ENCODE measurements at regions of chr5 and their contacts with region 1.

Region 1: GRCh38 chr5:170225326-170226128 is 7.3 kb upstream of the C5orf58 start:
- DNase-seq: peak; percentile 86
- ATAC-seq: peak; percentile 68
- H3K4me3 Mint-ChIP-seq: no peak overlapping the region
- H3K27ac Mint-ChIP-seq: no peak overlapping the region
- H3K4me1 Mint-ChIP-seq: peaks cover 4% of the 10 kb centered on the region
- H3K27me3 Mint-ChIP-seq: no peaks in the 10 kb centered on the region

Region 2: DNA sequence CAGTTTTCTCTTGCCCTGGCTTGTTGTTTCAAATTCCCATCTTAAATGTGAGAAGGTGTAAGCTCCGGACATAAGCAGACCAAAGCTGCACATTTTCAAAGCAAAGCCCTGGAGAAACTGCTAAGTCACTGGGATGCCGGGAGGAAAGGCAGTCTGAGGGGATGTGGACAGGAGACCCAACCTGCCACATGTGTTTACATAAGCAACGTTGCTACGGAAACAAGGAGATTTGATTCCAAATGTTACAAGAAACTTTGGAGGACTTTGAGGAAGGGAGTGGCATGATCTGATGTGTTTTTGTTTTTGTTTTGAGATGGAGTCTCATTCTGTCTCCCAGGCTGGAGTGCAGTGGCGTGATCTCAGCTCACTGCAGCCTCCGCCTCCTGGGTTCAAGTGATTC is 219.5 kb before region 1 on chr5:
- CTCF ChIA-PET with region 1: no interaction called
- POLR2A ChIA-PET with region 1: no interaction called
- DNase-seq: no peak
- ATAC-seq: no peak
- H3K4me3 Mint-ChIP-seq: no peak overlapping the region
- H3K27ac Mint-ChIP-seq: no peak overlapping the region
- H3K4me1 Mint-ChIP-seq: no peaks in the 10 kb centered on the region
- H3K27me3 Mint-ChIP-seq: no peaks in the 10 kb centered on the region

Region 3: DNA sequence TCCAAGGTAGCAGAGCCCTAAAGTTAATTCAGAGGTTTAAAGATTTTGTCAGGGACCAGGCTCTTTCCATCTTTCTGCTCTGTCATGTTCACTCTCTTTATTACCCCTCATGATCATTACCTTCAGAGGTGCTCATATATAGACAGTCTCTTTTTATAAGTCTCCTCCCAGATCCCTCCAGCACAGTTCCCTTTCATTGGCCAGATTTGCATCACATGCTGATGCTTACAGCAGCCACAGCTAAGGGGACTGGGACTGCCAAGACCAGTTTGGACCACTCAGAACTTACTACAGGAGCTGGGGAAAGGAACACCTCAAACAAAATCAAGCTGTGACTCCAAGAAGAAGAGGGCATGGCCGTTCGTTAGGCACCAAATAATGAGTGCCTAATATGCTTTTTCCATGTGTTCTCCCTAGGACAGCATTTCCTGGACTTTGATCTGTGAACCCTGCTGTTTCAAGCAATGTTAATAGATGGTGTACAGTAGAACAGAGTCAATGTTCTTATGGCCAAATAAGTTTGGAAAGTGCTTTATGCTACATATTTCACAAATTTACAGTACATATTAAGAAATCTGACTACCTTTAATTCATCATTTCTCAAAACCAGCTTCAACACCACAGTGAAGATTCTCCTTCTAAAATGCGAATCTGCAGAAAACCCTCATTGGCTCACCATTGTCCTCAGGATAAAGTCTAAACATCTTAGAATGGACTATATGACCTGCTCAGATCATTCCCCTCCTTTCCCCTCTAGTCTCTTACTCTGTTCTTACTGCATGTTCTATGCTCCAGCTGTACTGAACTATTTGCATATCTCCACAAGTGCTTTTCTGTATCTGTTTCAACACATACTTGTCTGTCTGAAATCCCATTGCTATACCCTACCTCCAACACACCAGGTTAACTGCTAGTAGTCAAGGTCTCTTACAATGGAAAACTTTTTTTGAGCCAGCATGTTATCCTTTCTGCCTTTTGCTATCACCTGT is 10.6 kb after region 1 on chr5:
- CTCF ChIA-PET with region 1: interaction called, 29 read pairs
- POLR2A ChIA-PET with region 1: no interaction called
- DNase-seq: no peak
- ATAC-seq: no peak
- H3K4me3 Mint-ChIP-seq: no peak overlapping the region
- H3K27ac Mint-ChIP-seq: no peak overlapping the region
- H3K4me1 Mint-ChIP-seq: peaks cover 3% of the 10 kb centered on the region
- H3K27me3 Mint-ChIP-seq: no peaks in the 10 kb centered on the region

Region 4: GRCh38 chr5:170262061-170263045 is 36.8 kb after region 1 on chr5:
- CTCF ChIA-PET with region 1: interaction called, 55 read pairs
- POLR2A ChIA-PET with region 1: interaction called, 3 read pairs
- DNase-seq: peak; percentile 82
- ATAC-seq: peak; percentile 68
- H3K4me3 Mint-ChIP-seq: peak overlapping the region; percentile 70
- H3K27ac Mint-ChIP-seq: peak overlapping the region; percentile 95
- H3K4me1 Mint-ChIP-seq: peaks cover 99% of the 10 kb centered on the region
- H3K27me3 Mint-ChIP-seq: no peaks in the 10 kb centered on the region

Region 5: DNA sequence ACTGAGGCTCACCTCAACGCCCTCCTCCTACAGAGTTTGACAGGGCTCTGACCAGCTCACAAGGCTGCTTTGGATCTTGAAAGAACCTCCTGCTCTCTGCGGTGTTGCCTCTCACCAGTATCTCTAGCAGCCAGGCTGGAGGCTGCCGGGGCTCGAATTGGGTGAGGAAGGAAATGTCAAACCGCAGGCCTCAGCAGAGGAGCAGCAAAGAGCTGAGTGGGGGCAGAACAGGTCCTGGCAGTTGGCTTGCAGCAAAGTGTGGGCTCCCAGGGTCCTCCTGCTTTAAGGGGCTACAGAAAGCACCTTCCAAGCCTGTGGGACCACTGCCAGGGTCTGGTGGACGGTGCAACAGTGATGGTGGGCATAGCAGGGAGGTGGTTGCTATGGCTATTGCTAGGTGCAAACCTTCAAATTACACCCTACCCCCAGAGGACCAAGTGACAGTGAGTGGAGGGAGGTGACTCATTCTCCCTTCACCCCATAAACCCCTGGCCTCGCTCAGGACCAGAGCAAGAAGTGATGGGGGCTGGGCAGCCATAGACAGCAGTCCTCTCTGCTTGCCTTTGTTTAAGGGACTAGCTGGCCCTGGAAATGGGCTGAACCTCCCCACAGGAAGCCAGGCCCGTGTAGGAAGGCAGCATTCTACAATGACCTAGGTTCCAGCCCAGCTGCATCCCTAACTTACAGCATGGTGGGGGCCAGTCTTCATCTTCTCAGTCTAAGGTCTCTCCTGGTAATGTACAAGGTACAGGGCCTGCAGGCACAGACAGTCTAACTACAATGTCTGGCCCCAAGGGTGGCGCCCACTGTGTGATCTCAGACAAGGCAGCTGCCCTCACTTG is 53.3 kb after region 1 on chr5:
- CTCF ChIA-PET with region 1: interaction called, 26 read pairs
- POLR2A ChIA-PET with region 1: no interaction called
- DNase-seq: peak; percentile 97
- ATAC-seq: peak; percentile 77
- H3K4me3 Mint-ChIP-seq: peak overlapping the region; percentile 72
- H3K27ac Mint-ChIP-seq: peak overlapping the region; percentile 94
- H3K4me1 Mint-ChIP-seq: peaks cover 94% of the 10 kb centered on the region
- H3K27me3 Mint-ChIP-seq: no peaks in the 10 kb centered on the region

Region 6: GRCh38 chr5:170333161-170333910 is 107.8 kb after region 1 on chr5:
- CTCF ChIA-PET with region 1: interaction called, 130 read pairs
- POLR2A ChIA-PET with region 1: interaction called, 6 read pairs
- DNase-seq: peak; percentile 79
- ATAC-seq: peak; percentile 43
- H3K4me3 Mint-ChIP-seq: no peak overlapping the region
- H3K27ac Mint-ChIP-seq: no peak overlapping the region
- H3K4me1 Mint-ChIP-seq: peaks cover 30% of the 10 kb centered on the region
- H3K27me3 Mint-ChIP-seq: no peaks in the 10 kb centered on the region

Region 7: DNA sequence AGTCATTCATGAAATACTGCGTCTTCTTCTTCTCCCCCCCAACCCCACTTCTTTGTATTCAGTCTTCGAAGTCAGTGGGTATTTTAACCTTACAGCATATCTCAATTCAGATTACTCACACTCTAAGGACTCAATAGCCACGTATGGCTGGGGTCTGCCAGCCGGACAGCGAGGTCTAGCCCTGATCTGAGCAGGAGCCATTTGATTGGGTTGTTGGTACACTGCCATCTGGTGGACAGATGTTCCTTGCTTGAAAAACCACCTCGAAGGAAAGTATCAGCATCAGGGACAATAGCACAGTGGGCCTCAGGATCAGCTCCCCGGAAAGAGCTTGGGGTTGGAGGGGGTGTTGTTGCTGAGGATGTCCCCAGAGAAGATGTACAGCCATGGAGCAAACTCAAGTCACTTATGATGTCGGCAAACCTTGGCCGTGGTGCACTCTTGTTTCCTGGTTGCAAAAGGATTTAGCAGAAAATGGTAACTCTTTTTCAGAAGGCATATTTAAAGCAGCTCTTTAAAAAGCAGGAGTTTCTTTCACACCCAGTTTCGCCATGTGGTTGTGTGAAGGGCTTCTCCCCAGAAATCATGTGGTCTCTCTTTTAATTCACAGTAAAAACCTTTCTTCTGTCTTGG is 195.4 kb after region 1 on chr5:
- CTCF ChIA-PET with region 1: interaction called, 130 read pairs
- POLR2A ChIA-PET with region 1: no interaction called
- DNase-seq: peak; percentile 69
- ATAC-seq: peak; percentile 68
- H3K4me3 Mint-ChIP-seq: no peak overlapping the region
- H3K27ac Mint-ChIP-seq: no peak overlapping the region
- H3K4me1 Mint-ChIP-seq: peaks cover 7% of the 10 kb centered on the region
- H3K27me3 Mint-ChIP-seq: peaks cover 19% of the 10 kb centered on the region

Measured in activated CD8-positive, alpha-beta T cell treated with anti-CD3 and anti-CD28 coated beads, Interleukin-2, amount 10 ng/mL, durations not matched to agents 7 days and 5 days (primary cell).